ENCODE measurements at regions of chr2 and their contacts with region 1.

Region 1: DNA sequence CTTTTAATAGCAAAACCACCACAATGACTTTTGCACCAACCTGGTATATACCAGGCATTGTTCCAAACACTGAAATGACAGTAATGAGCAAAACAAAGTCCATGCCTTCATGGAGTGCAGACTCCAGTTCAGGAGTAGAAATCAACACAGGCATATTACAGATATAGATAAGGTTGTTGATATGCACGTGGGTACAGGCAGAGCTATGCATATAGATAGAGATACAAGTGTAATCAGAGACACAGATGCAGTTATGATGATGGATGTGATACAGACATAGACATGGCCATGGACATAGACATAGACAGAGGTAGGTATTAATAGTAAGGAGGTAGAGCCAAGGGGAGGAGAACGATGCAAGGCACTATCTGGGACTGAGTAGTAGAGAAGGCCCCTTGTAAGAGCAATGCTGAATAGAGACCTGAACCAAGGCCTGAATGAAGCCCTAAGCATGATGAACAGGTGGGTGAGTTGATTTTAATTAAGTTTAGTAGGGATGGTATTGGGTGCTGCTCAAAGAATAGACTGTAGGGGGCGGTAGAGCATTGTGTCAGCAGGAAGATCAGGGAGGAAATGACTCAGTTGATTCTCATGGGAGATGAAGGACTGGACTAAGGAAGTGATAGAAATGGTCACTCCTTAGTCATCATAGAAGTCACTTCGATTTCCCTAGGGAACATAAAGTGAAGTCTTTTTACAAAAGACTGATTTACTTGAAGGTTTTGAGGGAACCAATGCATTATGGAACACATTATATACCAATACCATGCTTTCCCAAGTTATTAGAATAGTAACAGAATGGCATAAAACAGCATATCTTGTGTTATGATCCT is 39.4 kb downstream of the CMPK2 start:
- DNase-seq: peak; percentile 72 to 89 (median 81)
- H3K4me3 ChIP-seq: no peak overlapping the region
- H3K4me3 Mint-ChIP-seq: no peak overlapping the region
- H3K27ac ChIP-seq: no peak overlapping the region
- H3K27ac Mint-ChIP-seq: peak overlapping the region in 2 of 7 donors; percentile 5 to 8
- H3K4me1 ChIP-seq: peaks cover 6 to 8% of the 10 kb centered on the region in 2 donors
- H3K4me1 Mint-ChIP-seq: peaks cover 12% of the 10 kb centered on the region
- H3K27me3 ChIP-seq: no peaks in the 10 kb centered on the region
- H3K27me3 Mint-ChIP-seq: peaks cover 0 to 7% (median 0%) of the 10 kb centered on the region in 3 donors
- CTCF ChIP-seq: peak; percentile 83

Region 2: DNA sequence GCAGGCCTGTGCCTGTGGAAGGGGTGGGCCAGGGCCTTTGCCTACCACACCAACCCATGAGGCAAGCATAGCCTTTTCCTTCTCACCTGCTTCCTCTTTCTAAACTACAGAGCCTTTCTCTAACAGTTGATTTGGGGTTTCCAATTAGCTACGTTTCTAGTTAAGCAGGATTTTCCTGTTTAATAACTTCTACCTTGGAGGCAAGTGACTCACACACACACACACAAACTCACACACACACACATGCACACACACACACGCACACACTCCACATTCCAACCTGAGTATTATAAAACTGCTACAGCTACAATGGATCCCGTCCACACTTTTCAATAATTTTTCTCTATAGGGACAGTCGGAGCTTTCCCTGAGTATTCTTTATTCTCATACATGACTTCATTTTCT is 1049.2 kb before region 1 on chr2:
- intact Hi-C with region 1: no loop called
- DNase-seq: no peak
- H3K4me3 ChIP-seq: no peak overlapping the region
- H3K4me3 Mint-ChIP-seq: no peak overlapping the region
- H3K27ac ChIP-seq: no peak overlapping the region
- H3K27ac Mint-ChIP-seq: no peak overlapping the region
- H3K4me1 ChIP-seq: no peaks in the 10 kb centered on the region
- H3K4me1 Mint-ChIP-seq: no peaks in the 10 kb centered on the region
- H3K27me3 ChIP-seq: no peaks in the 10 kb centered on the region
- H3K27me3 Mint-ChIP-seq: peaks cover 0 to 1% (median 0%) of the 10 kb centered on the region in 3 donors
- CTCF ChIP-seq: no peak

Region 3: DNA sequence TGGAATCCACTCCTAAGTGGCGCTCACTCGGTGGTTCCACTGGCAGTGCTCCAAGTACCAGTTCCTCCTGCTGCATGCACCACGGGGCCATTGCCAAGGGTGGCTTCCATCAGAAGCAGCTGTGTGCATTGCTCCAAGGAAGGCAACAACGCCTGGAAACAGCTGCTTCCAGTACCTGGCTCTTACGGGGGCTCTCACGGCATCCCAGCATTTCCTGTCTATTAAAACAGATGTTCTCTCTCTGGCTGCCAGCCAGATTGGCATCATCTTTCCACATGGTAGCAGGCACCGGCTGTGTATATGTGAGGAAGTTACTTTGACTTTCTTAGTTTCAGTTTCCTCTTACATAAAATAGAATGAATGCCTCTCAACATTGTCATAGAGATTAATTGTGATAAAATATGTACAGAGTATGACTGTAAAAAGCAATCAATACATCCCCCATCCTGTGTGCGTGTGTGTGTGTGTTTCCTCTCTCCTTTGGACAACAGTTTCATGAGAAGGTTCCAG is 45.5 kb before region 1 on chr2:
- intact Hi-C with region 1: no loop called
- DNase-seq: peak; percentile 39 to 49 (median 47)
- H3K4me3 ChIP-seq: peak overlapping the region; percentile 26 to 73 (median 53)
- H3K4me3 Mint-ChIP-seq: peak overlapping the region; percentile 74 to 77
- H3K27ac ChIP-seq: peak overlapping the region; percentile 15 to 77
- H3K27ac Mint-ChIP-seq: peak overlapping the region; percentile 49 to 88 (median 80)
- H3K4me1 ChIP-seq: peaks cover 46% of the 10 kb centered on the region in 2 donors
- H3K4me1 Mint-ChIP-seq: peaks cover 54% of the 10 kb centered on the region
- H3K27me3 ChIP-seq: no peaks in the 10 kb centered on the region
- H3K27me3 Mint-ChIP-seq: peaks cover 2 to 7% (median 6%) of the 10 kb centered on the region in 3 donors
- CTCF ChIP-seq: no peak

Region 4: GRCh38 chr2:6865346-6866274 is 39.3 kb after region 1 on chr2 and contains the start of gene CMPK2:
- intact Hi-C with region 1: loop called in 1 of 2 experiments (anchors 5 kb)
- DNase-seq: peak; percentile 73 to 74 (median 74)
- H3K4me3 ChIP-seq: peak within 1 kb of the TSS; percentile 79 to 93 (median 92)
- H3K4me3 Mint-ChIP-seq: peak within 1 kb of the TSS; percentile 93 to 98
- H3K27ac ChIP-seq: peak within 1 kb of the TSS; percentile 75 to 78
- H3K27ac Mint-ChIP-seq: peak within 1 kb of the TSS; percentile 77 to 96 (median 89)
- H3K4me1 ChIP-seq: peaks cover 23 to 25% of the 10 kb centered on the region in 2 donors
- H3K4me1 Mint-ChIP-seq: peaks cover 34% of the 10 kb centered on the region
- H3K27me3 ChIP-seq: no peaks in the 10 kb centered on the region
- H3K27me3 Mint-ChIP-seq: peaks cover 0 to 2% (median 0%) of the 10 kb centered on the region in 3 donors
- CTCF ChIP-seq: no peak
- polyA plus RNA-seq, gene CMPK2: 12.6 to 18.1 (median 17.0) TPM

Measured in CD14-positive monocyte (primary cell).